ENCODE measurements at regions of chr15 and their contacts with region 1.

Region 1: GRCh38 chr15:74793135-74794028 is 11.5 kb downstream of the CSK start:
- DNase-seq: peak; percentile 80
- ATAC-seq: peak; percentile 27
- H3K4me3 Mint-ChIP-seq: peak overlapping the region; percentile 43
- H3K27ac Mint-ChIP-seq: peak overlapping the region; percentile 79
- H3K4me1 Mint-ChIP-seq: peaks cover 88% of the 10 kb centered on the region
- H3K27me3 Mint-ChIP-seq: no peaks in the 10 kb centered on the region

Region 2: DNA sequence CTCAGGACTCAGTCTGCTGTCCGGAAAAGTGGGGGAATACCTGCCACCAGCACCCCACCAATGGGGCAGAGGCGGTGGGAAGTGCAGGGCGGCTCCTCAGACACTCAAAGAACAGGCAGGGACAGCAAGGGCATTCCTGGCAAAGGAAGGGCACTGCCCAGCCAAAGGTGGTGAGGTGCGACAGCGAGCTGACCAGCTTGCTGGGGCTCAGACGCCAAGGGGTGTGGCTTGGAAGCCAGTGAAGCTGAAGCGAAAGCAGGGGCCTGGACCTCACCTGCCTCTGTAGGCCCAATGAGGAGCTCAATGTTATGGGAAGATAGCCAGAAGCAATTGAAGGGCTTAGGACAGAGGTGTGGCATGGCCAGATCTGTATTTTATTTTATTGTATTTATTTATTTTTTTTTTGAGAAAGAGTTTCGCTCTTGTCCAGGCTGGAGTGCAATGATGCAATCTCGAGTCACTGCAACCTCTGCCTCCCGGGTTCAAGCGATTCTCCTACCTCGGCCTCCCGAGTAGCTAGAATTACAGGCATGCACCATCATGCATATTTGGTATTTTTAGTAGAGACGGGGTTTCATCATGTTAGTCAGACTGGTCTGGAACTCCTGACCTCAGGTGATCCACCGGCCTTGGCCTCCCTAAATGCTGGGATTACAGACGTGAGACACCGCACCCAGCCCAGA is 14.8 kb after region 1 on chr15:
- CTCF ChIA-PET with region 1: interaction called, 11 read pairs
- DNase-seq: no peak
- ATAC-seq: no peak
- H3K4me3 Mint-ChIP-seq: no peak overlapping the region
- H3K27ac Mint-ChIP-seq: no peak overlapping the region
- H3K4me1 Mint-ChIP-seq: peaks cover 18% of the 10 kb centered on the region
- H3K27me3 Mint-ChIP-seq: peaks cover 2% of the 10 kb centered on the region

Region 3: GRCh38 chr15:74857082-74857655 is 63.8 kb after region 1 on chr15:
- CTCF ChIA-PET with region 1: interaction called, 10 read pairs
- DNase-seq: no peak
- ATAC-seq: no peak
- H3K4me3 Mint-ChIP-seq: no peak overlapping the region
- H3K27ac Mint-ChIP-seq: peak overlapping the region; percentile 91
- H3K4me1 Mint-ChIP-seq: peaks cover 43% of the 10 kb centered on the region
- H3K27me3 Mint-ChIP-seq: no peaks in the 10 kb centered on the region

Region 4: DNA sequence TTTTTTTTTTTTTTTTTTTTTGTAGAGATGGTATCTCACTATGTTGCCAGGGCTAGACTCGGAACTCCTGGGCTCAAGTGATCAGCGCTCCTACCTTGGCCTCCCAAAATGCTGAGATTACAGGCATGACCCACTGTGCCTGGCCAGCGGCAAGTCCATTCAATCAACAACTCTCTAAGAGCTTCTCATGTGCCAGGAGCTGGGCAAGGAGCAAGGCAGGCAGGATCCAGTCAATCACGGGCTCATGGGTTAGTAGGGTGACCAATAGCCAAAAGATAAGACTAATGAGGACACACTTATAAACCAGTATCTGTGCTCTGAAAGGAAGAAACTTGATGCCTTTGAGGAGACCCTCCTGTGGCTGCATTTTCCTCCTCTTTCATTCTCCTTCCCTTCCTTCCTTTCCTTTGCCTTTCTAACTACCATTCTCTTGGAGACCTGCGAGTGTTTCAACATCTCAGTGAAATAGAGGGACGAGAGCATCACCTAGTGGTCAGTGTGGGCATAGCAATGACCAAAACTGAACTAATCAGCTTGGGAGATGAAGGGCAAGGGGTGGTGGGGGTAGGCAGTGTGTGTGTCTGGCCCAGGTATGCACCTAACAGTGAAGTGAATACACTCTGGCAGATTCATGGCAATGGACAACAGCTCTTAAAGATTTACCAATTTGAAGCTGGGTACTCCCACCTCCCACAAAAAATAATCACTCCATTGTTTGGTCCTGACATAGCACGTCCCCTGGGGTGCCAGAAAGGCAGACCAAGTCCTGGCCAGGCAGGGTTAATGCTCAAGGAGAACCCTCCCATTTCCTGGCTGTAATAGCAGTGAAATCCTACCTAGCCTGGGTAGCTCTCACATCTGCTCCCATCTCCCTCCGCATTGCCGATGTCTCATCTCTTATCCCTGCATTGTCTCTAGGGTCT is 157.0 kb after region 1 on chr15:
- CTCF ChIA-PET with region 1: interaction called, 17 read pairs
- DNase-seq: peak; percentile 86
- ATAC-seq: peak; percentile 80
- H3K4me3 Mint-ChIP-seq: no peak overlapping the region
- H3K27ac Mint-ChIP-seq: no peak overlapping the region
- H3K4me1 Mint-ChIP-seq: peaks cover 9% of the 10 kb centered on the region
- H3K27me3 Mint-ChIP-seq: no peaks in the 10 kb centered on the region

Measured in activated CD8-positive, alpha-beta memory T cell treated with anti-CD3 and anti-CD28 coated beads, Interleukin-2, amount 10 ng/mL, durations not matched to agents 7 days and 5 days (primary cell).